ENCODE measurements at regions of chr7 and their contacts with region 1.

Region 1: DNA sequence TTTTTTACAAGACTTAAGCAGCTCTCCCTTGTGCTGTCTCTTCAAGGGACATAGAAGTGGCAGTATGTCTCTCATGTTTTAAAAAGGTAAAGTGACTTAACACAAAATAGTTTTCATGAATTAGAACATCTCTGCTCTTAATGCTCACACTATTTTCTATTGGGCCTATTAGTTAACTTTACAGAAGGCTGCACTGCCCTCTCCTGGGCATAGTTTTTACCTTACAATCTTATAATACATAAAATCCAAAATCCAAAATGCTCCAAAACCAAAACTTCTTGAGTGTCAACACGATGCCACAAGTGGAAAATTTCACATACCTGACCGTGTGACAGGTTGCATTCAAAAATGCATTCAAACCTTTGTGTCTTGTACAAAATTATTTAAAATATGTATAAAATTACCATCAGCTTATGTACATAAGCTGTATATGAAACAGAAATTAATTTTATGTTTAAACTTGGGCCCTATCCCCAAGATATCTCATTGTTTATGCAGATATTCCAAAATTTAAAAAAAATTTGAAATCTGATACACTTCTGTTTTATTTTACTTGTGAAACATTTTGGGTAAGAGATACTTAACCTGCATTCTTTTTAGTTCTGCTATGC is 25.8 kb downstream of the TES start:
- DNase-seq: peak; percentile 29
- CTCF ChIP-seq: peak; percentile 36

Region 2: DNA sequence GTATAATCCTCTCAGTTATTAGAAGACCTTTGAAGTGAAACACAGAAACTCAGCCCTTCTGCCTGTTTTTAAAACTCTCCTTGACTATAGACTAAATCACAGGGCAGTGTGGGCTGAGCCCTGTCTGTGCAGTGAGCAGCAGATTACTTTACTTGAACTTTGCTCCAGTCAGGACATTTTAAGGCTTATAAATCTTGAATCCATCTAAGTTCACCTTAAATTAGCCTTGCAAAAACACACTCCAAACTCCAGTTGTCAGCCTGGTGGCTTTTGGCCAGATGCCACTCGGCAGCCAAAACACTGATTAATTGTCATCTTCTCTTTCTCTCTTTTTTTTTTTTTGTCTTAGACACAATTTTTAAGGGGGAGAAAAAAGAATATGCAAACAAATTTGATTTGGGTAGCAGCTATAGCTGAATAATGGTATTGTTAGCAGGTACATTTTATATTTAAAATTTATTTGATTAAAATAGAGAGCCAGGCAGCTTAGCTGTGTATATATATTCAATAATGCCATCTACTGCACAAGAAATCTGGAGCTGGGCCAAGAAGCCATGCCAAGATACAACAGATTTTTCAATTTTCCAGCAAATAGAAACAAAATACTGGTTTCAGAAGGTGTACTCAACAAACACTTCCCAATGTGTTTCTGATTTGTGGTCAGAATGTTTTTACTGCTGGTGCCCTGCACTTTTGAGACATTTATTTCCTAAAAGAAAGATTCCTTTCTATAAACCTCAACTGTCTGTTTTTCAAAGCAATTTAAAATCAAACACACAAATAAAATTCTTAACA is 453.2 kb before region 1 on chr7:
- CTCF ChIA-PET with region 1: no interaction called
- POLR2A ChIA-PET with region 1: no interaction called
- DNase-seq: no peak
- CTCF ChIP-seq: no peak

Region 3: GRCh38 chr7:116113310-116113709 is 122.8 kb before region 1 on chr7:
- CTCF ChIA-PET with region 1: no interaction called
- POLR2A ChIA-PET with region 1: no interaction called
- DNase-seq: no peak
- CTCF ChIP-seq: no peak

Region 4: DNA sequence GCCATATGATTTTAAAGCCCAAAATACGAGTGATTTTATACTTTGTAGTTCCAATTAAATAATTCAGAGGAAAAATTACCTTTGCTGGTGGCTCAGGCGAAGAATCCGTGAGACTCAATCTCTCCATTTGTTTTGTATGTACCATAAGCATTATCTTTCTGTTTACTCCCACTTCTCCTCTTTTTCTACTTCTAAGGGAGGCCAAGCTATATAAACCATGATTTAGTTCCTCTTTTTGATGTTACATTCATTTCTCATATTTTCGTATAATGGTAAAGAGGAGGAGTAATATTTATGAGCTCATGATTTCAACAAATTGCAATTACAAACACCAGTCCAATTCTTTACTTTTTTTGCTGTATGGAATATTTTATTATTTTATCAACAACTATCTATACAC is 76.4 kb before region 1 on chr7:
- CTCF ChIA-PET with region 1: interaction called, 20 read pairs
- POLR2A ChIA-PET with region 1: no interaction called
- DNase-seq: no peak
- CTCF ChIP-seq: no peak

Region 5: DNA sequence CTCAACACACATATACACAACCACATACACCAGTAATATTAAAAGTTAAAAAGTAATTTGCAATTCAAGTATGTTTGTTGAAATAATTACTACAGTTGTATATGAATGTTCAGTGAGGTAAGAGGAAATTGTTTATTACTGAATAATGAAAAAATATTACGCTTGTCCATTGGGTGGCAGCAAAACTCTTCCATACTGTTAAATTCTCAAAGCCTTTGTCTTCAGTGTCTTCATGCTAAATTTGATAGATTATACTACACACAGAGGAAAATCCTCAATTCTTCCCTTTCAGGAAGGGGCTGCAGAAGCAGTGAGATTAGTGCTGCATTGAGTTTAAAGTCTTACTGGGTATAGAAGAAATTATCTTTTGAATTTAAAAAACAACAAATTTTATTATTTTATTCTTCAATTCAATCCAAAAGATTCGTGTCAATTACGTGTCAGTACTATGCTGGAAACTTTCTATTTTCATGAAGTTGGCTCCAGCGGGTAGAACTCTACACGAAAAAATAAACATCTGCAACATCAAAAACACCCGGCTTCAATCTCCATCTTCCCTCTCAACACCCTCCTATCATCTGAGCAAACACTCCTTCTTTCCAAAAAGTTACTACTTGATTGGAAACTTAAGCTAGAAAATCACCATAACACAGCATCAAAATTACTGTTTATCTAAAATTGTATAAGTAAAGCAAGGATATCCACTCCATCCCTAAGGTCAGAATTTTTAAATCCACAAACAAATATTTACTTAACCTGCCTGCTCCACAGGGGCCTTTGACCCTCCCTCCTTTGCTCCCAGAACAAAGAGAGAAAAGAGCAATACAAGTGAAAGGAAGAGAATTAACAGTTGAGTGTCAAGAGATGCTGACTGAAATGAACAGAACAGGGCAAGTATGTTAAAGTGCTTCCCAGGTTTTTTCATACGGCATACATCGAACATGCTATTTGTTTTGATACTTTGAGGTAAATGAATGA is 62.8 kb before region 1 on chr7:
- CTCF ChIA-PET with region 1: interaction called, 345 read pairs
- POLR2A ChIA-PET with region 1: no interaction called
- DNase-seq: peak; percentile 18
- CTCF ChIP-seq: peak; percentile 48

Region 6: DNA sequence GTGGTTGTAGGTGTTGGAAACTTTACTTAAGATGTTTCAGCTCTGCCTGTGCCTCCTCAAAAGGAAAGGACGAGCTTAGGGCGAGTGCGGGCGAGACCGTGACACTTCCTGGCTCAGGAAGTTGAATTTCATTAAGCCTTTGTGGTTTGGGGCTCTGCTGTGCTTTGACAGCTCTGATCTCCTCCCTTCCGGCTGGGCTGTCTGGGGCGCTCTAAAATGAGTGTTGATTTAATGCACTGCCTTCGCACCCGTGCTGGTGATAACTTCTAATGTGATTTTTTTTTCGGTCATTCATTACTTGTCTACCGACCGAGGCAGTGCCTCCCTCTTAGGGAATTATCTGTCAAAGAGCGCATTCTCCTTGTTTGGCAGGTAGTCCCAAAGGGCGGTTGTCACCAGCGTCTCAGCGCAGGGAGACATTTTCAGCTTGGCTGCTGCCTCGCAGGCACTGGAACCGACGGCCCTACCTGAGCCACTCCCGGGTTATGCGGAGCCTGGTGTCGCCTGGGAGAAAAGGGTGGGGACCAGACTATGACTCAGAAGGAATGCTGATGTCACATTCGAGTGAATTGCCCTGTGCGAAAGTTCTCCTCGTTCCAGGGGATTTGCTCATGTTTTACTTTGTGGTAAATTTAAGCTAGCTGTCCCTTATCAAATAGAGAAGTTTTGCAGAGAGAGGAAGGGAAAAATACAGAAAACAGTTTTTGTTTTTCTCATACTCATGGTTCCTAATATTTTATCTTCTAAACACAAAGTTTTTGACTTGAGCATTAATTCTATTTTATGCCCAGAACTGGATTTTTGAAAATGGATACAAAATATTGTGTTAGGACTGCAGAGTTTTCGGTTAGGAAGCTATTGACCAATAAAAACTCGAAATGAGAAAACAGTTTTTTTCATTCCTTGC is 24.9 kb before region 1 on chr7:
- CTCF ChIA-PET with region 1: interaction called, 64 read pairs
- POLR2A ChIA-PET with region 1: no interaction called
- DNase-seq: peak; percentile 59
- CTCF ChIP-seq: no peak

Region 7: DNA sequence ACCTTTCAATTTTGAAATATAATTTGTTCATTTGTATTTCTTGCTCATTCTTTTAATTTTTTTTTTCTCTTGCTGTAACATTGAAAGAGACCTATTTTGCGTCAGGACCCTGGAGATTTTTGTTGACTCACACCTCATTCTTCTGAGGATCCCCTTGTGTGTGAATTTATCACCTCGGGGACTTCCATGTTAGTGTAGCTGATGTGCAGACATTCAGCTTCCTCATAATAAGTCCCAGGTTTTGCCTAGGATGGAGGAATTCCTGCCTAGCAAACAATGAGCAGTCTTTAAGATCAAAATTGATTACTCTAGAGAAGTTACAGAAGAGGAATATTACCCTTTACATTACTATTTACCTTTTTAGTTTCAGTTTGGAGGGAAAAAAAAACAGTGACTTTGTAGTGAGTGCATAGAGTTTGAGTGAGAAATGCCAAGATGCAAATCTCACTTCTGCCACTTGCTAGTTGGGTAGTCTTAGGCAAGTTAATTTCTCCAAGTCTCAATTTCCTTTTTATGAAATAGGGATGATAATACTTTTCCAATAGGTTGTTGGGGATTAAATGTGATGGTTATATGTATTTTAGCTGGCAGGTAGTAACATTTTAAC is 11.5 kb before region 1 on chr7:
- CTCF ChIA-PET with region 1: interaction called, 41 read pairs
- POLR2A ChIA-PET with region 1: no interaction called
- DNase-seq: no peak
- CTCF ChIP-seq: no peak

Region 8: DNA sequence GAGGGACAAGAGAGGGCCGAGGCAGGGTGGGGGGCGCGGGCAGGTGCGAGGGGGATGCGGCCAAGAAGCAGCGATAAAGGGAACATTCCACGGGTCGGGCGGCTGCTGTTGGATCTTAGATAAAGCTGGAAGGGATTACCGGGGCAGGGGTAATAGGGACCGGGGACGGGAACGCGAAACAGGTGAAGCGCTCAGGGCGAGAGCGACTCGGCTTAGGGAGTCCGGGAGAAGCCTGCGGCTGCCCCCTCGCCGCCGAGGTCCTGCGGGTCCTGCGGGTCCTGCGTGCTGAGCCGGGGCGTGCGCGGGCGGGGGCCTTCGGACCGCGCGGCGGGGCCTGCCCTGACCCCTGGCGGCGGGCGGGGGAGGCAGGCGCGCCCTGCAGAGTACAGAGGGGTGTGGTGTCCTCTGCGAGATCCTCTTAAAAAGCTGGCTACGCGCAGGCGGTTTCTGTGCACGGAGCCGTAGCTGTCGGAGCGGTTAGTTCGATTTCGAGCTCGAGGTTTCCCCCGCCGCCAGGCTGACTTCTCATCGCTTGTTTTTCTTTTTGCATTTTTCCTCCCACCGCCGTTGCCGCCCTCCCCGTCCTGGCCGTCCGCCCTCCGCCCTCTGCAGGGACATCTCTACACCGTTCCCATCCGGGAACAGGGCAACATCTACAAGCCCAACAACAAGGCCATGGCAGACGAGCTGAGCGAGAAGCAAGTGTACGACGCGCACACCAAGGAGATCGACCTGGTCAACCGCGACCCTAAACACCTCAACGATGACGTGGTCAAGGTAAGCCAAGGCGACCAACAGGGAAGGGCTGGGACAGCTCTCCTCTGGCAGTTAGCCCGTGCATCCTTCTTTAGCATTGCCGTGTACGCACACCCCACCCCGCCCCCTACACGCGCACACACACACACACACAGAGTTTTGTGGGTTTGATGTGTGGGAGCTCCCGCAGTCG is 290.1 kb after region 1 on chr7:
- CTCF ChIA-PET with region 1: interaction called, 10 read pairs
- POLR2A ChIA-PET with region 1: no interaction called
- DNase-seq: peak; percentile 91
- CTCF ChIP-seq: peak; percentile 90

Measured in GM10248 (cell line).